ENCODE measurements at regions of chr7 and their contacts with region 1.

Region 1: DNA sequence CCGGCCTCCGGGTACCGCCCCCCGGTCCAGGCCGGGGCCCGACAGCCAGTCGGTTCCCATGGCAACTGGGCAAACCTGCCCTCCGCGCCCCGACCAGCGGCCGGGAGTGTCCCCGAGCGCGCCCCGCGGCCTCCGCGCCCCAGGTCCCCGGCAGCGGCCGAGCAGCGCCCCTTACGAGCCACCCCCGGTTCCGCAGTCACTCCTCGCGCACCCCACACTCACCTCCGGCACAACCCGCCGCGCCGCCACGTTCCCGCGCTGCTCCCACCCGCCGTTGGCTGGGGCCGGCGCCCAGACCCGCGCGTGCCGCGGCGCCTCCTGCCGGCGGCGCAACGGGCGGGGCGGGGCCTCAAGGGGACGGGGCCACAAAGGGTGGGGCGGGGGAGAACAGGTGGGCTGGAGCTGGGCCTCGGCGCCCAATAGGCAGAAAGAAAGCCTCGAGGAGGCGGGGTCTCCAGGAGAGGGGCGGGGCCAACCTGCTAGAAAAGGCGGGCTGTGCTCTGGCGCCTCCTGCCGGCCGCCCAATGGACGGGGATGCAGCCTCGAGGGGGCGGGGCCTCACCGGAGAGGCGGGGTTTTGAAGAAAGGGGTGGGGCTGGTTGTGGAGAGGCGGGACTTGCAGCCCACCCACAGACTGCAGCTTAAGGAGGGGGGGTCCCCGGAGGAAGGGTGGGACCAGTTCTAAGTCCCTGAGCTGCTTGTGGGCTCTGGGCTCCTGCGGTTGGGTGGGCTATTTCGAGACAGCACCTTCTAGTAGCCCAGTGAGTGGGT is at the start of gene RADIL:
- DNase-seq: peak; percentile 90 to 96 (median 95)
- ATAC-seq: peak; percentile 87 to 96 (median 96)
- H3K4me3 ChIP-seq: peak within 1 kb of the TSS; percentile 53 to 83 (median 73)
- H3K27ac ChIP-seq: peak within 1 kb of the TSS; percentile 67 to 93 (median 84)
- H3K4me1 ChIP-seq: peaks cover 0 to 35% (median 10%) of the 10 kb centered on the region in 12 donors
- H3K27me3 ChIP-seq: peaks cover 0 to 24% (median 0%) of the 10 kb centered on the region in 9 donors
- CTCF ChIP-seq: peak; percentile 70 to 97 (median 90)
- POLR2A ChIP-seq: no peak
- total RNA-seq, gene RADIL: 1.1 to 9.0 (median 3.4) TPM

Region 2: GRCh38 chr7:4319280-4319679 is 564.3 kb before region 1 on chr7:
- intact Hi-C with region 1: no loop called
- DNase-seq: no peak
- ATAC-seq: no peak
- H3K4me3 ChIP-seq: no peak overlapping the region
- H3K27ac ChIP-seq: no peak overlapping the region
- H3K4me1 ChIP-seq: no peaks in the 10 kb centered on the region
- H3K27me3 ChIP-seq: no peaks in the 10 kb centered on the region
- CTCF ChIP-seq: no peak
- POLR2A ChIP-seq: no peak

Region 3: DNA sequence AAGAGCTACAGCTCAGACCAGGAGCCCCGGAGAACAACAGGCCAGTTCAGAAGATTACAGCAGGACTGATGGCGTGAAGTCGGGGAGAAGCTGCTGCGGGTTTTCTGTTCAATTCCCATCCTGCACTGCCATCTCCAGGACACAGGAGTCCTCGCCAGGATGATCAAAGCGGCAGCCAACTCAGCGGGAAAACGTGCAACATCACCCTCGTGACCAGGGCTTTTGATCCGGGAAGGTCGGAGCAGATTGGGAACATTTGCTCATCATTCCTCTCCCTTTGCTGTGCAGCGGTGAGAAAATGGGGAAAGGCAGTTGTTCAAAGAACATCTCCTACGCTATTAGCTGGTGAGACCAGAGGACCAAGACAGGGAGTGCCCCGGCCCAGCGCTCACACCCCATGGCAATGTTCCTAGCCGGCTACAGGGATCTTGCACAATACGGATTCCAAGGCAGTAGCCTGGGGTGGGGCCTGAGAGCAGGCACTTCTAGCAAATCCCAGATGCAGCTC is 251.8 kb before region 1 on chr7:
- intact Hi-C with region 1: no loop called
- DNase-seq: peak; percentile 66 to 84 (median 79)
- ATAC-seq: peak; percentile 78 to 98 (median 95)
- H3K4me3 ChIP-seq: peak overlapping the region in 9 of 12 donors; percentile 18 to 41 (median 32)
- H3K27ac ChIP-seq: peak overlapping the region in 3 of 12 donors; percentile 43 to 64 (median 44)
- H3K4me1 ChIP-seq: peaks cover 0 to 13% (median 6%) of the 10 kb centered on the region in 12 donors
- H3K27me3 ChIP-seq: no peaks in the 10 kb centered on the region
- CTCF ChIP-seq: peak; percentile 42 to 78 (median 65)
- POLR2A ChIP-seq: no peak

Region 4: GRCh38 chr7:4681886-4682620 is 201.5 kb before region 1 on chr7 and contains the start of gene FOXK1:
- intact Hi-C with region 1: loop called in 2 of 10 experiments (anchors 5 to 10 kb)
- DNase-seq: peak; percentile 76 to 92 (median 86)
- ATAC-seq: peak; percentile 34 to 87 (median 72)
- H3K4me3 ChIP-seq: peak within 1 kb of the TSS; percentile 88 to 99 (median 97)
- H3K27ac ChIP-seq: peak within 1 kb of the TSS; percentile 87 to 99 (median 94)
- H3K4me1 ChIP-seq: peaks cover 4 to 40% (median 21%) of the 10 kb centered on the region in 12 donors
- H3K27me3 ChIP-seq: no peaks in the 10 kb centered on the region
- CTCF ChIP-seq: no peak
- POLR2A ChIP-seq: peak in 1 of 2 donors; percentile 51
- total RNA-seq, gene FOXK1: 12.4 to 43.7 (median 22.5) TPM

Region 5: DNA sequence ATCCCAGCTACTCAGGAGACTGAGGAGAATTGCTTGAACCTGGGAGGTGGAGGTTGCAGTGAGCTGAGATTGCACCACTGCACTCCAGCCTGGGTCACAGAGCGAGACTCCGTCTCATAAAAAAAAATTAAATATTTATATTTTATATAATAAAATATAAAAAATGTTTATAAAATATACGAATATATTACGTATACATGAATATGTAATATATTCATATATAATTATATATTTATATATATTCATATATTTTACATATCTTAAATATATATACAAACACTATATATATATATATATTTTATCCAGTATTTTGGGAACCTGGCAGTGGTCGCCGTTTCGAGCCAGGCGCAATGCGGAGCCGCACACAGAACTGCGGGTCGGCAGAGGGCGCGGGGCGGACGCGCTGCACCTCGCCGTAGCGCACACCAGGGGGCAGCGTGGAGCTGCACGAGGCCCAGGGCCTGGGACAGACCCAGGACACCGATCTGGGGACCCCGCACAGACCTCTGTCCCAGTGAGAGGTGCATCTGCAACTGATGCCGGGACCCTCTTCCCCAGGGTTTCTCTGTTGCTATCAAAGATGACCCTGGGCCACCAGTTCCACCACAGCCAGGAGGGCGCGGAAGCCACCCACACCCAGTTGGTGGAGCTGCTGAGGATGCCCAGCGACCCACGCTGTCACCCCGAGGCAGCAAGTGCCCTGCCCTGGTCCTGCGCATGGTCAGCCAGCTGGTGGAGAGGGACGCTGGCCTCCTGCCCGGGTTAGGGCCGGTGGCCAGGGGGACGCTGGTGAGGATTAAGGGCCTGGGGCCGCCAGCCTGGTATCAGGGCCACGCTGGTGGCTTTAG is 85.5 kb before region 1 on chr7:
- intact Hi-C with region 1: loop called (anchors 1 to 10 kb)
- DNase-seq: peak in 3 of 5 donors; percentile 41 to 77 (median 56)
- ATAC-seq: peak in 3 of 4 donors; percentile 68 to 73 (median 69)
- H3K4me3 ChIP-seq: no peak overlapping the region
- H3K27ac ChIP-seq: peak overlapping the region in 6 of 12 donors; percentile 20 to 70 (median 46)
- H3K4me1 ChIP-seq: peaks cover 0 to 26% (median 9%) of the 10 kb centered on the region in 12 donors
- H3K27me3 ChIP-seq: no peaks in the 10 kb centered on the region
- CTCF ChIP-seq: peak; percentile 82 to 96 (median 88)
- POLR2A ChIP-seq: no peak

Region 6: GRCh38 chr7:4837803-4838625 is 45.5 kb before region 1 on chr7:
- intact Hi-C with region 1: loop called in 5 of 10 experiments (anchors 5 to 10 kb)
- DNase-seq: no peak
- ATAC-seq: peak in 3 of 4 donors; percentile 20 to 37 (median 31)
- H3K4me3 ChIP-seq: no peak overlapping the region
- H3K27ac ChIP-seq: peak overlapping the region in 5 of 12 donors; percentile 7 to 47 (median 23)
- H3K4me1 ChIP-seq: peaks cover 0 to 26% (median 2%) of the 10 kb centered on the region in 12 donors
- H3K27me3 ChIP-seq: no peaks in the 10 kb centered on the region
- CTCF ChIP-seq: no peak
- POLR2A ChIP-seq: no peak

Region 7: GRCh38 chr7:4919969-4920766 is 36.6 kb after region 1 on chr7:
- intact Hi-C with region 1: no loop called
- DNase-seq: no peak
- ATAC-seq: no peak
- H3K4me3 ChIP-seq: no peak overlapping the region
- H3K27ac ChIP-seq: no peak overlapping the region
- H3K4me1 ChIP-seq: no peaks in the 10 kb centered on the region
- H3K27me3 ChIP-seq: peaks cover 0 to 7% (median 0%) of the 10 kb centered on the region in 9 donors
- CTCF ChIP-seq: no peak
- POLR2A ChIP-seq: no peak

Region 8: DNA sequence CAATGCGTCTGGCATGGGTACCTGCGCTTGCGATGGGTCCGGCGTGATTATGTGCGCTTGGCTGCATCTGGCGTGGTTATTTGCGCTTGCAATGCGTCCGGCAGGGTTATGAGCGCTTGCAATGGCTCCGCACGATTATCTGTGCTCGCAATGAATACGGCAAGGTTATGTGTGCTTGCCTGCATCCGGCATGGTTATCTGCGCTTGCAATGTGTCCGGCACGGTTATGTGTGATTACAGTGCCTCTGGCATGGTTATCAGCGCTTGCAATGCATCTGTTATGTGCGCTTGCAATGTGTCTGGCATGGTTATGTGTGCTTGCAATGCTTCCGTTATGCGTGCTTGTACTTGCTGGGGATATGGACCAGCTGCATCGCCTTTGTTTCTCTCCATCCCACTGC is 199.8 kb after region 1 on chr7:
- intact Hi-C with region 1: loop called in 1 of 10 experiments (anchors 10 kb)
- DNase-seq: no peak
- ATAC-seq: no peak
- H3K4me3 ChIP-seq: no peak overlapping the region
- H3K27ac ChIP-seq: no peak overlapping the region
- H3K4me1 ChIP-seq: peaks cover 0 to 5% (median 0%) of the 10 kb centered on the region in 12 donors
- H3K27me3 ChIP-seq: peaks cover 0 to 31% (median 6%) of the 10 kb centered on the region in 9 donors
- CTCF ChIP-seq: no peak
- POLR2A ChIP-seq: no peak